Ovary (tissue), 10 donors: ENCODE measurements at regions of chr10 and their contacts with region 1.

Region 1: GRCh38 chr10:127715782-127716378 is 21.1 kb upstream of the FOXI2 start:
- DNase-seq: no peak
- H3K4me3 ChIP-seq: no peak overlapping the region
- H3K27ac ChIP-seq: no peak overlapping the region
- H3K4me1 ChIP-seq: no peaks in the 10 kb centered on the region
- H3K27me3 ChIP-seq: no peaks in the 10 kb centered on the region
- CTCF ChIP-seq: peak; percentile 17 to 45 (median 40)
- EP300 ChIP-seq: no peak
- POLR2A ChIP-seq: no peak

Region 2: GRCh38 chr10:127813290-127813689 is 97.4 kb after region 1 on chr10:
- intact Hi-C with region 1: loop called in 2 of 4 experiments (anchors 5 kb)
- DNase-seq: no peak
- H3K4me3 ChIP-seq: no peak overlapping the region
- H3K27ac ChIP-seq: no peak overlapping the region
- H3K4me1 ChIP-seq: no peaks in the 10 kb centered on the region
- H3K27me3 ChIP-seq: no peaks in the 10 kb centered on the region
- CTCF ChIP-seq: peak; percentile 42 to 59 (median 47)
- EP300 ChIP-seq: no peak
- POLR2A ChIP-seq: no peak

Region 3: GRCh38 chr10:127853868-127854768 is 138.2 kb after region 1 on chr10:
- intact Hi-C with region 1: loop called in 3 of 4 experiments (anchors 2 to 10 kb)
- DNase-seq: peak; percentile 47 to 76 (median 69)
- H3K4me3 ChIP-seq: no peak overlapping the region
- H3K27ac ChIP-seq: no peak overlapping the region
- H3K4me1 ChIP-seq: no peaks in the 10 kb centered on the region
- H3K27me3 ChIP-seq: no peaks in the 10 kb centered on the region
- CTCF ChIP-seq: peak; percentile 61 to 76 (median 63)
- EP300 ChIP-seq: no peak
- POLR2A ChIP-seq: no peak